ENCODE measurements at regions of chr5 and their contacts with region 1.

Region 1: GRCh38 chr5:149497357-149497756 is 53.9 kb downstream of the CSNK1A1 start:
- DNase-seq: no peak
- H3K4me3 ChIP-seq: no peak overlapping the region
- H3K27ac ChIP-seq: peak overlapping the region; percentile 6 to 50
- H3K4me1 ChIP-seq: peaks cover 9% of the 10 kb centered on the region
- H3K27me3 ChIP-seq: no peaks in the 10 kb centered on the region
- CTCF ChIP-seq: no peak
- POLR2A ChIP-seq: no peak

Region 2: DNA sequence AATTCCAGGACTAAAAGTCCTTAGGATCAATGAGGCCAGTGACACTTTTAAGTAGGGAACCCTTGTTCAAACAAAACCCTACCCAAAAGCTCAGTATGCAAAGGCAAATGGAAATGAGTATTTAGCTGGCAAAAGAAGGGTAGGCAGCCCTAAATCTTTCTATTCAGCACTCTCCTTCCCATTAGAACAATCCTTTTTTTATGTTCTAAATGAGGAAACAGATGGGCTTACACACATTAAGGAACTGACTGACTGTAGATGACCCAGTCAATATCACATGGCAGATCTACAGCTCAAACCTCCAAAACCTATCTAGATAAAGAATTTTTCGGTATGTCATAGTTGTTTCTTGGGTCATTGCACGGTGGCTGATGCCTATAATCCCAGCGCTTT is 46.7 kb after region 1 on chr5:
- intact Hi-C with region 1: loop called (anchors 5 kb)
- DNase-seq: no peak
- H3K4me3 ChIP-seq: no peak overlapping the region
- H3K27ac ChIP-seq: peak overlapping the region; percentile 1 to 17
- H3K4me1 ChIP-seq: peaks cover 11% of the 10 kb centered on the region
- H3K27me3 ChIP-seq: no peaks in the 10 kb centered on the region
- CTCF ChIP-seq: no peak
- POLR2A ChIP-seq: no peak